ENCODE measurements at regions of chr1 and their contacts with region 1.

Region 1: GRCh38 chr1:23763041-23763577 is 15.1 kb upstream of the PITHD1 start:
- DNase-seq: no peak
- H3K4me3 ChIP-seq: no peak overlapping the region
- H3K27ac ChIP-seq: peak overlapping the region in 10 of 59 donors; percentile 8 to 61 (median 23)
- H3K27me3 ChIP-seq: no peaks in the 10 kb centered on the region
- CTCF ChIP-seq: no peak

Region 2: GRCh38 chr1:23562137-23562876 is 200.8 kb before region 1 on chr1:
- intact Hi-C with region 1: loop called in 1 of 2 experiments (anchors 5 kb)
- DNase-seq: peak; percentile 25 to 93 (median 88)
- H3K4me3 ChIP-seq: peak overlapping the region in 45 of 59 donors; percentile 0 to 47 (median 22)
- H3K27ac ChIP-seq: peak overlapping the region; percentile 66 to 96 (median 91)
- H3K27me3 ChIP-seq: peaks cover 0 to 53% (median 7%) of the 10 kb centered on the region in 45 donors
- CTCF ChIP-seq: peak in 13 of 56 donors; percentile 2 to 39 (median 20)

Region 3: DNA sequence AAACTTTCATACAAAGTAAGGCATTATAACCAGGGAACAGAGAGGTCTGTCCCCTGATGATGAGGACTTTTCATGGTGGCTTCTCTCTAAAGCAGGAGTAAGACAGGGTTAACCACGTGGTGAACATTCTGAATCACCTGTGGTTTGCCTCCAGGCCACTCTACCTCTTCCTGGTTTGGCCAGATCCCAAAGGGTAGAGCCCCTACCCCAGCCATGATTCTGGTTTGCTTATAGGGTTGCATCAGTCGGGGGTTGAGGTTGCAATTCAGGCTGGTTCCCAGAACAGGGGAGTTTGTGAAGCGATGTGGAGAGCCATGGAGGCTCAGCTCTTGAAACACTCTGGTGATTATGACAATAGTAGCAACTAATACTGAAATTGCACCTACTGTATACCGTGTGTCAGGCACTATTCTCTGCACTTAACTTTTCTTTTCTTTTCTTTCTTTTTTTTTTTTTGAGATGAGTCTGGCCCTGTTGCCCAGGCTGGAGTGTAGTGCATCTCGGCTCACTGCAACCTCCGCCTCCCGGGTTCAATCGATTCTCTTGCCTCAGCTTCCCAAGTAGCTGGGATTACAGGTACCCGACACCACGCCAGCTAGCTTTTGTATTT is 141.7 kb after region 1 on chr1:
- intact Hi-C with region 1: no loop called
- DNase-seq: no peak
- H3K4me3 ChIP-seq: no peak overlapping the region
- H3K27ac ChIP-seq: no peak overlapping the region
- H3K27me3 ChIP-seq: peaks cover 0 to 59% (median 13%) of the 10 kb centered on the region in 45 donors
- CTCF ChIP-seq: no peak

Measured in dorsolateral prefrontal cortex (tissue), 120 donors.